IMR-90 (cell line): ENCODE measurements at regions of chr4 and their contacts with region 1.

Region 1: DNA sequence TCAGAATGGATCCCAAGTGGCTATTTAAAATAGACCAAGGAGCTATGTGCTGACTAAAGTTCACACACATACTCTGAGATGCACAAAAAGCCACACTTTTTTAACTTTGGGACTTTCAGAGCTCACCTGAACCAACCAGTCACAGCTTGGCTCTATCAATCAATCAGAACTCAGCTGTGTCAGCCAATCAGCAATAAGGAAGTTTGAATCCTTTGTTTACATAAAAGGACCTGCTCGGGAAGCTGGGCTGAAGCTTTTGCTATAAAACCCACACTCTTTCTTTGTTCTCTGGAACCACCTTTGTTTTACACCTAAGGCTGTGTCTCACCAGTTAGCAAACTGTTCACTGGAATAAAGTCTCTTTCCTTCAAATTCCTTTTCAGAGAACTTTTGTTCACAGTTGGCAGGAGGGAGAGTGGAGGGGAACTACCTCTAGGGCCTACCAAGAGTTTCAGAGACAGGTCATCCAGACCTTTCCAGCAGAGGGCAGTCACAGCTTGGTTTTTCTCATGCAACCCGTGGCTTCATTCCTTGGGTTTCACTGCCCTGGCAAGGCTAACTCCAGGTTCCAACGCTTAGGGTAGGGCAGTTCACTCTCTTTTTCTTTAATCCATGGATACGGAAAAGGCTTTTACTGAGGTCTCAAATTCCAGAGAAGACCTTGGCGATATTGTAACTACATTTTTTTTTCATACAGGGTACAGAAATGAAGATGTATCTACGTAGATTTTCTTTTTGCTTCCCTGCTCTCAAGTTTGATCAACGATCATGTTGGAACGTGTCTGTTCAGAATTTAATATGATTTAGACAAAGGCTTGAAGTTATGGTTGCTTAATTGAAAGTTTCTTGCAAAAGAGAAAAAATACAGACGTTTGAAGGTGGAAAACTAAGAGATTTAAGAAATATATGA is 80.7 kb downstream of the GPRIN3 start:
- DNase-seq: peak; percentile 62
- ATAC-seq: peak; percentile 96
- H3K4me3 ChIP-seq: no peak overlapping the region
- H3K27ac ChIP-seq: no peak overlapping the region
- H3K4me1 ChIP-seq: no peaks in the 10 kb centered on the region
- H3K27me3 ChIP-seq: no peaks in the 10 kb centered on the region
- CTCF ChIP-seq: peak; percentile 65
- POLR2A ChIP-seq: no peak
- RAD21 ChIP-seq: peak; percentile 68

Region 2: GRCh38 chr4:89177807-89178206 is 49.1 kb before region 1 on chr4:
- CTCF ChIA-PET with region 1: interaction called, 3 read pairs
- POLR2A ChIA-PET with region 1: interaction called, 12 read pairs
- dilution Hi-C with region 1: no loop called
- in situ Hi-C with region 1: no loop called
- intact Hi-C with region 1: no loop called
- DNase-seq: no peak
- ATAC-seq: no peak
- H3K4me3 ChIP-seq: no peak overlapping the region
- H3K27ac ChIP-seq: no peak overlapping the region
- H3K4me1 ChIP-seq: no peaks in the 10 kb centered on the region
- H3K27me3 ChIP-seq: no peaks in the 10 kb centered on the region
- CTCF ChIP-seq: no peak
- POLR2A ChIP-seq: no peak
- RAD21 ChIP-seq: no peak

Region 3: DNA sequence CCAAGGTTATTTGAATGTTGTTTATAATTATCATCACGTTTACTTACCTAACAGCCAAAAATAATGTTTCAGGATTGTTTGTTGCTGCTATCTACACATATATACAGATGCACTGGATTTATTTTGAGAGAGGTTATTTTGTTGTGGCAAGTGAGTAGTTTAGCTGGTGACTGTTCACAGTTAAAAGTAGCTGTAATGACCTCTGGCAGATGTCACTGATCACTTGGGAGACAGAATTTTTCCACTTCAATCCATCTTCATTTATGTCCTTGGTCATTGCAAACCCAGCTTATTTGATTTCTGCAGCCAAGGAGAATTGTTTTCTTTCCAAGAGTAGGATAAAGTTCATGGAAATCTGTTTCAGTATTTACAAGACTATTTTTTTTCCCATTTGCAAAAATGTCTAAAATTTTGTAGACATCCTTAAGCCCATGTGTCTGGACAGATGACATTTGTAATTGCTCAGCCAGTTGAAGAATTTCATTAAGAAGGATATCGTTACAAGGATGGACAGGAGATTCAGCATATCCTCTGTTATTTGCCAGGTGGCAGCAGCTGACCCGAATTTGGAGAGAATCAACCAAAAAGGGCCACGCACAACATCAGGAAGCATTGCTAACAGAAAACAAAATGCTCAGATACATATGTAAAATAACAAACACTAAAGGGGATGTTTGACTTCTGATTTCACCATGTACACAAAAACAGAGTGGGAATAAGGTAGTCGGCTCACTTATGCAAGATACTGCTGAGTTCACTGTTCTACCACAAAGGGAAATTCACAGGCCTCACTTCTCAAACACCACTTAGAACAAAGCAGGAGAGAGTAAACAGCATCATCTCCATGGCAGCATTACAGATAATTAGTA is 16.2 kb after region 1 on chr4:
- CTCF ChIA-PET with region 1: interaction called, 10 read pairs
- POLR2A ChIA-PET with region 1: no interaction called
- dilution Hi-C with region 1: no loop called
- in situ Hi-C with region 1: no loop called
- intact Hi-C with region 1: no loop called
- DNase-seq: no peak
- ATAC-seq: no peak
- H3K4me3 ChIP-seq: no peak overlapping the region
- H3K27ac ChIP-seq: no peak overlapping the region
- H3K4me1 ChIP-seq: no peaks in the 10 kb centered on the region
- H3K27me3 ChIP-seq: peaks cover 6% of the 10 kb centered on the region; the same call in 1 of the 2 replicates
- CTCF ChIP-seq: no peak
- POLR2A ChIP-seq: no peak
- RAD21 ChIP-seq: no peak

Region 4: GRCh38 chr4:89290727-89291516 is 64.0 kb after region 1 on chr4:
- CTCF ChIA-PET with region 1: no interaction called
- POLR2A ChIA-PET with region 1: no interaction called
- dilution Hi-C with region 1: no loop called
- in situ Hi-C with region 1: no loop called
- intact Hi-C with region 1: no loop called
- DNase-seq: no peak
- ATAC-seq: no peak
- H3K4me3 ChIP-seq: no peak overlapping the region
- H3K27ac ChIP-seq: no peak overlapping the region
- H3K4me1 ChIP-seq: no peaks in the 10 kb centered on the region
- H3K27me3 ChIP-seq: peaks cover 2% of the 10 kb centered on the region
- CTCF ChIP-seq: no peak
- POLR2A ChIP-seq: no peak
- RAD21 ChIP-seq: no peak

Region 5: DNA sequence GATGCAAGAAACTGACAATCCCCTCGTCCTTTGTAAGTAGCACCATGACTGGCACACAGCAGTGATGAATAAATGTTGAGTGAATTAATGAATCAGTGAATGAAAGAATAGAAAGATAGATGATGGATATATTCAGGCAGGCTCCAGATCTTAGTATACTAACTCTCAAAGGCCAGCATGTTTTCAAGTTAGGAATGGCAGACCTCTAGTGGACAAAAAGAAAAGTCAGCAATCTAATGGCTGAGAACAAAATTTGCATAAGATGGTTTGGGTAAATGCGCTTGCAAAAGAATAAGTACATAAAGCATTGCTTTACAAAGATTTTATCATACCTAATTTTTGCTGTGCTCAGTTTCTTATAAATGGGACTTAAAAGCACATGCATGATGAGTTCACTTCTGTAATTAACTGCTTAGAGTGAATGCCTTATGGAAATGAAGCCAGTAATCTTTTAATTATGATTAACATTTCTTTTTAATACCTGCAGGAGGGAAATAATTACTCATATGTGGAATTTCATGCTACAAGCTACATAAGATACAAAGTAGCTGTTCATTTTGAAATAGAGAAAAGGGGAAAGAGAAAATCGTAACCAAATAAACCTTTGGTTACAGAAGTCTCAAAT is 207.6 kb after region 1 on chr4:
- CTCF ChIA-PET with region 1: interaction called, 9 read pairs
- POLR2A ChIA-PET with region 1: no interaction called
- dilution Hi-C with region 1: no loop called
- in situ Hi-C with region 1: loop called (anchors 10 kb)
- intact Hi-C with region 1: loop called (anchors 1 kb)
- DNase-seq: peak; percentile 35
- ATAC-seq: peak; percentile 84
- H3K4me3 ChIP-seq: no peak overlapping the region
- H3K27ac ChIP-seq: no peak overlapping the region
- H3K4me1 ChIP-seq: no peaks in the 10 kb centered on the region
- H3K27me3 ChIP-seq: 0 out of 2 replicates have a peak, but pooled peaks cover 1% of the 10 kb centered on the region
- CTCF ChIP-seq: peak; percentile 69
- POLR2A ChIP-seq: no peak
- RAD21 ChIP-seq: peak; percentile 76

Region 6: DNA sequence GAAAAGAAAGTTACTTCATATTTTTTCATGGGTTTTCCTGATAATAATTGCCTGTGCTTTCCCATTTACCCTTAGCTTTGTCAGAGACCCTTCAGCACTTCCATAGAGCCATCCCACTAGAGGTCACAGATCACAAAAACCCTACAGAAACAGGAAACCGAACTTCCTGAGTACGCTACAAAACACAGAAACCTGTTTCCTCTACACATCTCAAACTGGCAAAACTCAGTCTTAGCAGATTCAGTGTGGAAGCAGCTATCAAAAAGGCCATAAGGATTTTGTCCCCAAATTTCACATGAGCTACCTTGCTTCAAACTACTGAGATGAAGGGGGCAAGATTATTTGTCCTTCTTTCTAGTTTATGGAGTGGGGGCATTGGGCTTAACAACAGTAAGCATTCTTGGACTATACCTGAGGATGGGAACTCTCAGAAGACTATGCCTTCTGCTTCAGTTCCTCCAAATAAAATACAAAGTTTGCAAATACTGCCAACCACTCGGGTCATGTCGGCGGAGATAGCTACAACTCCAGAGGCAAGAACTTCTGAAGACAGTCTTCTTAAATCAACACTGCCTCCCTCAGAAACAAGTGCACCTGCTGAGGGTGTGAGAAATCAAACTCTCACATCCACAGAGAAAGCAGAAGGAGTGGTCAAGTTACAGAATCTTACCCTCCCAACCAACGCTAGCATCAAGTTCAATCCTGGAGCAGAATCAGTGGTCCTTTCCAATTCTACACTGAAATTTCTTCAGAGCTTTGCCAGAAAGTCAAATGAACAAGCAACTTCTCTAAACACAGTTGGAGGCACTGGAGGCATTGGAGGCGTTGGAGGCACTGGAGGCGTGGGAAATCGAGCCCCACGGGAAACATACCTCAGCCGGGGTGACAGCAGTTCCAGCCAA is 668.0 kb after region 1 on chr4 and contains the start of gene MMRN1:
- CTCF ChIA-PET with region 1: no interaction called
- POLR2A ChIA-PET with region 1: no interaction called
- dilution Hi-C with region 1: no loop called
- in situ Hi-C with region 1: loop called (anchors 25 kb)
- intact Hi-C with region 1: loop called (anchors 2 kb)
- DNase-seq: no peak
- ATAC-seq: no peak
- H3K4me3 ChIP-seq: no peak within 1 kb of the TSS
- H3K27ac ChIP-seq: no peak within 1 kb of the TSS
- H3K4me1 ChIP-seq: no peaks in the 10 kb centered on the region
- H3K27me3 ChIP-seq: no peaks in the 10 kb centered on the region; the same call in 1 of the 2 replicates
- CTCF ChIP-seq: no peak
- POLR2A ChIP-seq: no peak
- RAD21 ChIP-seq: no peak
- total RNA-seq, gene MMRN1: not detected in 2 replicates

Region 7: DNA sequence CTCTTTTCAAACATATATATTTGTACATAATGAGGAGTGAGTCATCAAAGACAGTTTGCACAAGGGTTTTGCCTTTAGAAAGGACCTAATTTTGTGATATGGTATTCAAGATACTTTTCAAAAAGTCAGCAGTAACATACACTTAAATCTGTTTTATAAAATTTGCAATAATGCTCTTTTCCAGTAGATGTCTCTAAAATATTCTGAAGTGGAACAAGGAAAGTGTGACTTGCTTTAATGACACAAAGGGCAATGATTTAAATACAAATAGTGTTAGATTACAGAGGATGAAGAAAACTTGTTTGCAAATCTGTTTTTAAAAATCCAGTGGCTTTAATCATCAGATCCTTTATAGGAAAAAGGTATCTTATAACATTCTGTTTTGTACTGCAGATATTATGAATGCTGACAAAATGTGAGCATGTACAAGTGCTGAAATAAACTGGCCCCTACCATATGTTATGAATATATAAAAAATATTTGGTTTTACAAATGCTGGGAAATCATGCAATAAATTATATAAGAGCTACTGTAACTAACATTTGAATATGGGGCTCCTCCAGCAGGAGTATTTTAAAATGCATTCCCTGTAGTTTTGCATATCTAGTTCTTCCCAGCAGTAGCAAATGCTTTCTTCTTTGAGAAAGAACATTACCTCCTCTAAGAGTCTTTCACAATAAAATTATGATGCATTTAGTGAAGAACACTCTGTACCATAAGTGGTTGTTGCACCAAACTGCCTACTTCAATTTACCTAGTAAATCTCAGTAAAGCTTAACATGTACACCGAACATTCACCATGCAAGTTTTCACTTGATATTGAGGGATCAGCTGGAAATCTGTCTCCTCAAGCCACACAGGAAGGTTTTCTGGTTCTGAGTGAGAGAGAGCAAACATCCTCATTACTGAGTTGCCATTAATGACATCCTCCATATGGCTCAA is 688.0 kb after region 1 on chr4:
- CTCF ChIA-PET with region 1: no interaction called
- POLR2A ChIA-PET with region 1: no interaction called
- dilution Hi-C with region 1: no loop called
- in situ Hi-C with region 1: loop called (anchors 25 kb)
- intact Hi-C with region 1: no loop called
- DNase-seq: no peak
- ATAC-seq: no peak
- H3K4me3 ChIP-seq: no peak overlapping the region
- H3K27ac ChIP-seq: no peak overlapping the region
- H3K4me1 ChIP-seq: no peaks in the 10 kb centered on the region
- H3K27me3 ChIP-seq: no peaks in the 10 kb centered on the region
- CTCF ChIP-seq: no peak
- POLR2A ChIP-seq: no peak
- RAD21 ChIP-seq: no peak

Region 8: GRCh38 chr4:90246816-90247215 is 1019.9 kb after region 1 on chr4:
- CTCF ChIA-PET with region 1: no interaction called
- POLR2A ChIA-PET with region 1: no interaction called
- dilution Hi-C with region 1: no loop called
- in situ Hi-C with region 1: no loop called
- intact Hi-C with region 1: no loop called
- DNase-seq: no peak
- ATAC-seq: no peak
- H3K4me3 ChIP-seq: no peak overlapping the region
- H3K27ac ChIP-seq: no peak overlapping the region
- H3K4me1 ChIP-seq: no peaks in the 10 kb centered on the region
- H3K27me3 ChIP-seq: no peaks in the 10 kb centered on the region
- CTCF ChIP-seq: no peak
- POLR2A ChIP-seq: no peak
- RAD21 ChIP-seq: no peak

Region 9: GRCh38 chr4:90293320-90293719 is 1066.4 kb after region 1 on chr4:
- CTCF ChIA-PET with region 1: no interaction called
- POLR2A ChIA-PET with region 1: no interaction called
- dilution Hi-C with region 1: no loop called
- in situ Hi-C with region 1: no loop called
- intact Hi-C with region 1: loop called (anchors 2 kb)
- DNase-seq: peak; percentile 27
- ATAC-seq: no peak
- H3K4me3 ChIP-seq: no peak overlapping the region
- H3K27ac ChIP-seq: no peak overlapping the region
- H3K4me1 ChIP-seq: no peaks in the 10 kb centered on the region
- H3K27me3 ChIP-seq: no peaks in the 10 kb centered on the region
- CTCF ChIP-seq: peak; percentile 44
- POLR2A ChIP-seq: no peak
- RAD21 ChIP-seq: peak; percentile 49